Gastrocnemius medialis (tissue), 4 donors: ENCODE measurements at regions of chr17 and their contacts with region 1.

Region 1: GRCh38 chr17:32783602-32784001 is 93.3 kb downstream of the MYO1D start:
- DNase-seq: no peak
- ATAC-seq: peak in 1 of 2 donors; percentile 58
- H3K4me3 ChIP-seq: no peak overlapping the region
- H3K27ac ChIP-seq: no peak overlapping the region
- H3K4me1 ChIP-seq: no peaks in the 10 kb centered on the region
- H3K27me3 ChIP-seq: no peaks in the 10 kb centered on the region
- CTCF ChIP-seq: peak; percentile 65 to 79 (median 69)
- POLR2A ChIP-seq: no peak

Region 2: DNA sequence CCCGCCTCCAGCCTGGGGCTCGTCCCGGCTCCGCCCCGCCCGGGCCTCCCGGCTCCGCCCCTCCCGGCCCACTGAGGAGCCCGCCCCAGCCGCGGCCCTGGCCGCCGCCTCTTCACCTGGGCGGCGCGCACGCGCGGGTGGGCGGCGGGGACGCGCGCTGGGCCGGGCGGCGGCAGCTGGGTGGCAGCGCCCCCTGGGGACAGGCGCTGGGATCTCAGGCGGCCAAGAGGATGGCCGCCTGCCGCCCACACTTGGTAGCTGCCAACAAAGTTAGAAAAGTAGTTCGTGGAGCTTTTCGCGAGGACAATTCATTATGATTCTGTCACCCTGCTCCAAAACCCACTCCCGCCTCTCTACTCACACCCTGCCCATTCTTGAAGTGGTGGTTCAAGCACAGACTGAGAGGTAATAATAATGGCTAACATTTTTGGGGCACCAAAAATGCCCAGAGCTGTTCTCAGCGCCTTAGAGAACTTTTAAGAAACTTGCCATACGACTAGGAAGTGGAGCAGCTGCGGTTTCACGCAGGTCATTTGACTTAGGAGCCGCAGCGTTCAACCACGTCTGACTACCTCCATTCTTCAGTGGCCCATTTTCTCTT is 93.7 kb after region 1 on chr17:
- in situ Hi-C with region 1: loop called in 2 of 4 experiments (anchors 5 to 10 kb)
- intact Hi-C with region 1: loop called (anchors 1 kb)
- DNase-seq: peak; percentile 67 to 86
- ATAC-seq: peak; percentile 97
- H3K4me3 ChIP-seq: peak overlapping the region; percentile 60 to 85 (median 64)
- H3K27ac ChIP-seq: peak overlapping the region; percentile 38 to 79 (median 57)
- H3K4me1 ChIP-seq: no peaks in the 10 kb centered on the region
- H3K27me3 ChIP-seq: peaks cover 0 to 3% (median 0%) of the 10 kb centered on the region in 3 donors
- CTCF ChIP-seq: peak; percentile 78 to 99 (median 97)
- POLR2A ChIP-seq: no peak

Region 3: DNA sequence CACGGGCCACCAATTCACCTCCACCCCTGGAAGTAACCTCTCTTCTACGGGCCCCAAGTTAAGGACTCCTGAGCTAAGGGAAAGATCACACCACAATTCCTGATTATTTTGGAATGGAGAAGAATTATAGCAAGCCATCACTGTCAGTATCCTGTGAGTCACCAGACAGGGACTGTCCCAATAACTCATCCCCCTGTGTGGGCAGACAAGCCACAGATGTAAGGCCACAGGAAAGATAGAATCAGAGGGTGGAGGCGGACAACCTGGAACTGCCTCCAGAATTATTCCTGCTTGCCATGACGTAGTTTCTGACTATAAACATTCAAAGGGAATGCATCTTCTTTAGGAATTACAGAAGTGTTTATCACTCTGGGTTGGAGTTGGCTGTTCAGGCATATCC is 99.1 kb after region 1 on chr17:
- in situ Hi-C with region 1: loop called in 2 of 4 experiments (anchors 5 to 10 kb)
- intact Hi-C with region 1: loop called (anchors 1 kb)
- DNase-seq: no peak
- ATAC-seq: no peak
- H3K4me3 ChIP-seq: no peak overlapping the region
- H3K27ac ChIP-seq: no peak overlapping the region
- H3K4me1 ChIP-seq: no peaks in the 10 kb centered on the region
- H3K27me3 ChIP-seq: peaks cover 0 to 3% (median 0%) of the 10 kb centered on the region in 3 donors
- CTCF ChIP-seq: no peak
- POLR2A ChIP-seq: no peak

Region 4: GRCh38 chr17:32909787-32910369 is 126.3 kb after region 1 on chr17:
- in situ Hi-C with region 1: loop called in 2 of 4 experiments (anchors 10 kb)
- intact Hi-C with region 1: loop called (anchors 10 kb)
- DNase-seq: peak; percentile 20 to 47
- ATAC-seq: peak; percentile 42 to 51
- H3K4me3 ChIP-seq: no peak overlapping the region
- H3K27ac ChIP-seq: no peak overlapping the region
- H3K4me1 ChIP-seq: no peaks in the 10 kb centered on the region
- H3K27me3 ChIP-seq: no peaks in the 10 kb centered on the region
- CTCF ChIP-seq: peak in 4 of 5 experiments; percentile 22 to 57 (median 54)
- POLR2A ChIP-seq: no peak

Region 5: DNA sequence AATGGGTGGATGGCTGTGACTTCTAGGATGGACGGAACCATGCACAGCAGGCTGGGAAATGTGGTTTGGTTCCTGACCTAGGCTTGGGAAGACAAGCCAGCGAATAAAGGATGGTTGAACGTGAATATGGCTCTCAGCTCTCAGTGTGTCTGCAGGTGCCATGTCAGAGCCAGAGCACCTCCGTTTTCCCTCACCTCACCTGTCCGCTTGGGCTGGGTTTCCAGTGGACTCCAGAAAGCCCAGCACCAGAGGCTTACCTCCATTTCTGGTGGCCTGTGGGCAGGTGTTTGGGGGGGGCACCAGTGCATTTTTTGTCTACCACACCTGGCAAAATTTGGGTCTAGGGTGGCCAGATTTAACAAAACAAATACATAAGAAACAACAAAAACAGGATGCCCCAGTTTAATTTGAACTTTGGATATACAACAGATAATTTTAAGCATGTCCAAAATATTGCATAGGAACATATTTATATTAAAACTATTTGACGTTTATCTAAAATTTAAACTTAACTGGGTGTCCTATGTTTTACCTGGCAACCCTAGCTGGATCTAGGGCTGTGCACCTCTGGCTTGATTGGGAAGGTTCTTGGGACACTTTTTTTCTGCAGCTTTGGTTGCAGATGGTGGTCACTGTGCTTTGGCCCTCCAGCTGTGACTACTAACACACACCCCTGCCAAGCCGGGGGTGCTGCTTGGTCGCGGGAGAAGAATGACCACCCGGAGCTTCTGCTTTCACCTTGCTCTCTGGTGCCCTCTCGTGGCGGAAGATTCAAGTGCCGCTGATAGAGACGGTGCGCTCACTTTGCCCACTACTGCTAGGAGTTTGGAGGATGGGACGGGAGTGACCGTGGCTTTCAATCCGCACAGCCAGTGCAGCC is 214.4 kb after region 1 on chr17:
- in situ Hi-C with region 1: no loop called
- intact Hi-C with region 1: loop called (anchors 1 kb)
- DNase-seq: peak; percentile 16 to 47
- ATAC-seq: peak; percentile 64 to 66
- H3K4me3 ChIP-seq: no peak overlapping the region
- H3K27ac ChIP-seq: no peak overlapping the region
- H3K4me1 ChIP-seq: no peaks in the 10 kb centered on the region
- H3K27me3 ChIP-seq: peaks cover 0 to 5% (median 0%) of the 10 kb centered on the region in 3 donors
- CTCF ChIP-seq: peak; percentile 51 to 86 (median 72)
- POLR2A ChIP-seq: no peak

Region 6: DNA sequence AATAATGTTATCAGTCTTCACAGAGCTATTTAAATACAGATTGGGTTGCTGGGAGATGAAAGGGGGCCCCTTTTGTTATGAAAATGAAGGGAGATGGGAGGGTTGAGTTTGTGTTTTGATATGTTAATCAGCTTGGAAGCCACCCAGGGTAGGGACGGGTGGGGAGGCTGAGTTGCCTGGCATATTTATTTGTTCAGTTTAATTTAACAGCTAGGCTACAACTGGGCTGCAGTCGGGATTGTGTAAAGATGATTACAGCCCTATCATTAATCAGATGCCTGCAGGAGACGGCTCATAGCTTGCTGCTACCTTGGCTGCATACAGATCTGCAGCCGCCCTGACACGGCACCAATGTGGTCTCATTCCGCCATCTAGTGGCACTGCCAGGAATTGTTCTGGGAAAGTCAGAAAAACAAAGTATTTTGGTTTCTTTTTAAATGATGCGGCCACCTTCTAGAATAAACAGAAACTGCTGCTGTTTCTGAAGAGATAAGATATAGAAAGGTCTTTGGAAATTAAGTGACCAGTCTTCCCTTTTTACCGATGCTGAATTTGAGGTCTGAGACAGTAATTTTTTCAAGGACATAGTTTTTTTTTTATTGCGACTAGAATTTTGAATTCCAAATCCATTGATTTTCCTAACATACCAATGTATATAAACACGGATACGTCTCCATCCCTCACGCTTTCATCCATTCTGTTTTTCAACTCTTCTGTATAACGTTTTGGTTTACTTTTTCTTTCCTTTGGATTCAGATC is 967.5 kb after region 1 on chr17:
- in situ Hi-C with region 1: no loop called
- intact Hi-C with region 1: loop called (anchors 5 kb)
- DNase-seq: peak; percentile 12 to 17
- ATAC-seq: peak in 1 of 2 donors; percentile 36
- H3K4me3 ChIP-seq: peak overlapping the region in 1 of 4 donors; percentile 47
- H3K27ac ChIP-seq: no peak overlapping the region
- H3K4me1 ChIP-seq: no peaks in the 10 kb centered on the region
- H3K27me3 ChIP-seq: peaks cover 7 to 10% (median 9%) of the 10 kb centered on the region in 3 donors
- CTCF ChIP-seq: peak; percentile 62 to 92 (median 67)
- POLR2A ChIP-seq: no peak